PC-3 (cell line): ENCODE measurements at regions of chr3 and their contacts with region 1.

Region 1: DNA sequence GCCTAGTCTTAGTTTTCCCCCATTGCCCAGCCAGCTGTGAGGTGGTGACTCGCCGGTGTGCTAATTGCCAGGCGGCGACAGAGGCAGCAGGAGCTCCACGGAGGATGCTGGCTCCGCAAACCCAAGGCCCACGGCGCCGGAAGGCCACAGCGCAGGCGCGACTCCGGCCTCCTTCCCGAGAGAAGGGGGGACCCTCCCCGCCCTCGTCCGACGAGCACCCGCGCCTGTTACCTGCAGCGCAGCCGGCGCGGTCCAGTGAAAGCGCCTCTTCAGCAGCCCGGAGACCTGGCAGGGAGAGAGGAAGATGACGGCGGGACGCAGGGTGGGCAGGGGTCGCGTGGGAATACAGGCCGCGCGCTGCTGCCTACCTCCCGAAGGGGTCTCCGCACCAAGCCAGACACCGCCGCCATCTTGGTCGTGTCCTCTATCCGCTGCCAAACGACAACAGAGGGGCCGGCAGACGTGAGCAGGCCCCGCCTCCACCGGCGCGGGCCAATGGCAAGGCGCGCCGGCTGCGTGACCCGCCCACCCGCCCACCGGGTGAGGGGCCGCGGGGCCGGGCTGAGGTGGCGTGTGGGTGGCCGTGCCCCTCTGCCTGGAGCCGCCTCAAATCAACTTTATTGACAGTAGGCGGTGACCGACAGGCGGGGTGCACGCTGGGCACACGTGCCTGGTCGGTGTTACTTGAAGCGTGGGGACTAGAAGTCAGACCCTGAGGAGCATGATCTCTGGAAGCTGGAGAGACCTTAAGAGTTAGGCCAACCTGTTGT is at the start of gene PDHB:
- DNase-seq: peak; percentile 91
- ATAC-seq: peak; percentile 95
- H3K4me3 ChIP-seq: peak within 1 kb of the TSS; percentile 93
- H3K27ac ChIP-seq: peak within 1 kb of the TSS; percentile 60
- H3K4me1 ChIP-seq: peaks cover 20% of the 10 kb centered on the region
- H3K27me3 ChIP-seq: no peaks in the 10 kb centered on the region
- CTCF ChIP-seq: 0 out of 2 replicates have a peak, but pooled peaks have one; percentile 12
- total RNA-seq, gene PDHB: 103 and 140 TPM in 2 replicates

Region 2: GRCh38 chr3:57864853-57865252 is 568.7 kb before region 1 on chr3:
- CTCF ChIA-PET with region 1: no interaction called
- POLR2A ChIA-PET with region 1: interaction called, 17 read pairs
- intact Hi-C with region 1: no loop called
- DNase-seq: peak; percentile 41
- ATAC-seq: no peak; the same call in 1 of the 2 replicates
- H3K4me3 ChIP-seq: no peak overlapping the region
- H3K27ac ChIP-seq: no peak overlapping the region
- H3K4me1 ChIP-seq: no peaks in the 10 kb centered on the region
- H3K27me3 ChIP-seq: no peaks in the 10 kb centered on the region
- CTCF ChIP-seq: peak; percentile 58

Region 3: GRCh38 chr3:58404396-58404795 is 29.2 kb before region 1 on chr3:
- CTCF ChIA-PET with region 1: no interaction called
- POLR2A ChIA-PET with region 1: no interaction called
- intact Hi-C with region 1: loop called (anchors 2 kb)
- DNase-seq: peak; percentile 88
- ATAC-seq: peak; percentile 100
- H3K4me3 ChIP-seq: no peak overlapping the region
- H3K27ac ChIP-seq: peak overlapping the region; percentile 62
- H3K4me1 ChIP-seq: peaks cover 16% of the 10 kb centered on the region
- H3K27me3 ChIP-seq: no peaks in the 10 kb centered on the region
- CTCF ChIP-seq: no peak

Region 4: GRCh38 chr3:58471025-58471887 is 37.7 kb after region 1 on chr3:
- CTCF ChIA-PET with region 1: no interaction called
- POLR2A ChIA-PET with region 1: no interaction called
- intact Hi-C with region 1: loop called (anchors 2 kb)
- DNase-seq: peak; percentile 97
- ATAC-seq: peak; percentile 98
- H3K4me3 ChIP-seq: peak overlapping the region; percentile 6; the same call in 1 of the 2 replicates
- H3K27ac ChIP-seq: peak overlapping the region; percentile 83
- H3K4me1 ChIP-seq: peaks cover 27% of the 10 kb centered on the region
- H3K27me3 ChIP-seq: no peaks in the 10 kb centered on the region
- CTCF ChIP-seq: no peak

Region 5: GRCh38 chr3:58491506-58492402 is 58.2 kb after region 1 on chr3 and contains the start of gene KCTD6:
- CTCF ChIA-PET with region 1: no interaction called
- POLR2A ChIA-PET with region 1: no interaction called
- intact Hi-C with region 1: loop called (anchors 1 kb)
- DNase-seq: peak; percentile 97
- ATAC-seq: peak; percentile 83
- H3K4me3 ChIP-seq: peak within 1 kb of the TSS; percentile 91
- H3K27ac ChIP-seq: no peak within 1 kb of the TSS
- H3K4me1 ChIP-seq: peaks cover 40% of the 10 kb centered on the region
- H3K27me3 ChIP-seq: no peaks in the 10 kb centered on the region
- CTCF ChIP-seq: peak; percentile 55
- total RNA-seq, gene KCTD6: 13.1 and 13.6 TPM in 2 replicates